ENCODE measurements at regions of chr1 and their contacts with region 1.

Region 1: GRCh38 chr1:165768513-165769394 is at the start of gene TMCO1:
- DNase-seq: peak; percentile 97
- H3K4me3 ChIP-seq: peak within 1 kb of the TSS; percentile 63 to 80
- H3K27ac ChIP-seq: peak within 1 kb of the TSS; percentile 84 to 87
- H3K4me1 ChIP-seq: peaks cover 0 to 51% (median 18%) of the 10 kb centered on the region in 4 donors
- H3K27me3 ChIP-seq: no peaks in the 10 kb centered on the region
- CTCF ChIP-seq: peak in 1 of 2 experiments; percentile 20

Region 2: DNA sequence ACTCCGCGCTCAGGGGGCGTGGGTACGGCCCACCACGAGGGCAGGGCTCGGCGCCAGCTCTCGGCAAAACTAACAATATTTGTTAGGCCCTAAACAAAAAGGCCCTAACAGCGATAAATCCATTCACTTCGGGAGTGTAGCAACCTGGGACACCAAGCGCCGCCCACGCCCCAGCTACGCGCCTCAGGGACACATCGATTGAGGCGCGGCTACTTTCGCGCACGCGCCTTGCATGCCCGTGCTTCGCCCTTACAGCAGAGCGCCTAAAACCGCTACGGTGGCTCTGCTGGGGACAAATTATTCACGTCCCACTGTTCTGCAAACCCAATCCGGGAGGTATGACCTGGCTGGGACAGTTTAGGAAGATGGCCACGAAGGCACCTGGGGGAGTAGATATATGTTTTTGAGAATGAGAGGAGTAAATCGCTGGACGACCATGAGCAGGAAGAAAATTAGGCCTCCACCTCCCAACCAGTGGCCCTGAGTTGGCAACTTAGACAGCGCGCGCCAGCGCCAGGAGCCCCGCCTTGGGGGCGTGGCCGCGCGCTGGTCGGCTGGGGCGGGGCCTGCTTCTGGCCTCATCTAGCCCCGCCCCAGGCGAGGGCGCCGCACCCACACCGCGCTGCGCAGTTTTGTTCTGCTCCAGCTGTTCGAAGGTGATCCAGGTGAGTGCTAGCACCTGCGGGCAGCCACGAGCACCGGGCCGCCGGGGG is 138.0 kb before region 1 on chr1 and contains the start of gene MGST3:
- intact Hi-C with region 1: loop called (anchors 10 kb)
- DNase-seq: peak; percentile 94 to 97
- H3K4me3 ChIP-seq: peak within 1 kb of the TSS; percentile 67 to 90
- H3K27ac ChIP-seq: peak within 1 kb of the TSS; percentile 77 to 88
- H3K4me1 ChIP-seq: peaks cover 0 to 38% (median 32%) of the 10 kb centered on the region in 4 donors
- H3K27me3 ChIP-seq: no peaks in the 10 kb centered on the region
- CTCF ChIP-seq: no peak

Region 3: DNA sequence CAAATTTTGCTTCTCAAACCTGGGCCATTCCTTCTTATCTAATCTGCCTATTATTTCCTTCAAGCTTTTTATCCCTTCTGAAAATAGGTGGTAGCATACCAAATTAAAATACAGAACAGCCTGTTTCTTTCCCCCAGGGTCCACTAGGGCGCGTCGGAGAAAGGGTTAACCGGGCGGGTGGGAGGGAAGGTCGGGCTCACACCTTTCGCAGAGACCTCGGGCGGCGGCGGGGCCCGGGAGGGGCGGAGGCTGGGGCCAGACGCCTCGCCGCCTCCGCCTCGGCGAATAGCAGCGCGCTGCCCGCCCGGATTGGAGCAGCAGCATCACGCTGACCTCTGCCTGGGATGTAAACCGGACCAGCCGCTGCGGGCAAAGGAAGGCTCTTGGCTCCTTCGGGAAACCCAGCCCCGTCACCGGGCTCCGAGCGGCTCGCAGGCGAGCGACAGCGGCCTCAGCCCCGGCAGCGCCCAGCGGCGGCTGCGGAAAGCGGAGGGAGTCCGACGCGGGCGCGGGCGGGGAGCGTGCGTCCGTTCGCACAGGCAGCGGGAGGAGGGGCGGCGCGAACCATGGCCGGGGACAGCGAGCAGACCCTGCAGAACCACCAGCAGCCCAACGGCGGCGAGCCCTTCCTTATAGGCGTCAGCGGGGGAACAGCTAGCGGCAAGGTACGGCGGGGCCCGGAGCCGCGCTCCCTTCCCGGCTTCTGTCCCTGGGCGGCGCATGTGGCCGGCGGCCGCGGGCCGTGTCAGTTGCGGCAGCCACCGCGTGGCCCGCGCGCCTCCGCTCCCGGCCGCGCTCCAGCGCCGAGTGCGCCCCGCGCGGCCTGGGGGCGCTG is 58.7 kb after region 1 on chr1 and contains the start of gene UCK2:
- intact Hi-C with region 1: loop called (anchors 2 kb)
- DNase-seq: peak; percentile 70 to 88
- H3K4me3 ChIP-seq: peak within 1 kb of the TSS; percentile 78 to 92
- H3K27ac ChIP-seq: peak within 1 kb of the TSS; percentile 79 to 89
- H3K4me1 ChIP-seq: peaks cover 0 to 16% (median 6%) of the 10 kb centered on the region in 4 donors
- H3K27me3 ChIP-seq: no peaks in the 10 kb centered on the region
- CTCF ChIP-seq: peak in 1 of 2 experiments; percentile 14

Region 4: GRCh38 chr1:165898837-165899236 is 130.1 kb after region 1 on chr1:
- intact Hi-C with region 1: loop called (anchors 5 kb)
- DNase-seq: peak; percentile 41 to 80
- H3K4me3 ChIP-seq: no peak overlapping the region
- H3K27ac ChIP-seq: peak overlapping the region; percentile 75 to 79
- H3K4me1 ChIP-seq: peaks cover 4 to 62% (median 44%) of the 10 kb centered on the region in 4 donors
- H3K27me3 ChIP-seq: no peaks in the 10 kb centered on the region
- CTCF ChIP-seq: no peak

Region 5: DNA sequence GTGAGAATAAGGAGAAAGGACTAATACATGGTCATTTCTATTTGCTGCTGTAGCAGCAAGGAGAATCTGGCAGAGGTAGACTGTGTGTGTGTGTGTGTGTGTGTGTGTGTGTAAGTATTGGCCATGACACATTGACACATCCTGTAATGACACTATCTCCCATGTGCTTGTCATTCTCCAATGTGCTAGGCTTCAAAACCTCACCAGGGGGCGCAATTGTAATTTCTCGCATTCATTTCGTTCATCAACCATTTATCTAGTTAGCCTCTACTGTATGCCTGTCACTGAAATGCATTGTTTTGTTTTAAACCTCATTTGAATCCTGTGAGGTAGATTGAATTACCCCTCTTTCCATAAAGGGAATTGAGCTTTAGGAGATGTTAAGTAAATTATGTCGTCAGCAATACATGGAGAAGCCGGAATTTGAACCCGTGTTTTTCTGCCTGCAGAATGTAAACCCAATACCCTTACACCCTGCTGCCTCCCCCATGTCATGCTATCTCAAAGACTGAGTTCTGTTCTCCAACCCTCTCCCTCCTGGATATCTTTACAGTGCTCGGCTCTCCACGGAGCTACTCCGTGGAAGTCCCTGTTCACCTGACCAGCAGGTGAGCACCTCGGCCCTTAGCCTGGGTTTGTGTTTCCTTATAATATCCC is 159.4 kb after region 1 on chr1:
- intact Hi-C with region 1: no loop called
- DNase-seq: no peak
- H3K4me3 ChIP-seq: no peak overlapping the region
- H3K27ac ChIP-seq: no peak overlapping the region
- H3K4me1 ChIP-seq: no peaks in the 10 kb centered on the region
- H3K27me3 ChIP-seq: peaks cover 0 to under 1% of the 10 kb centered on the region in 2 donors
- CTCF ChIP-seq: peak; percentile 51 to 59